PC-3 (cell line): ENCODE measurements at regions of chr13 and their contacts with region 1.

Region 1: DNA sequence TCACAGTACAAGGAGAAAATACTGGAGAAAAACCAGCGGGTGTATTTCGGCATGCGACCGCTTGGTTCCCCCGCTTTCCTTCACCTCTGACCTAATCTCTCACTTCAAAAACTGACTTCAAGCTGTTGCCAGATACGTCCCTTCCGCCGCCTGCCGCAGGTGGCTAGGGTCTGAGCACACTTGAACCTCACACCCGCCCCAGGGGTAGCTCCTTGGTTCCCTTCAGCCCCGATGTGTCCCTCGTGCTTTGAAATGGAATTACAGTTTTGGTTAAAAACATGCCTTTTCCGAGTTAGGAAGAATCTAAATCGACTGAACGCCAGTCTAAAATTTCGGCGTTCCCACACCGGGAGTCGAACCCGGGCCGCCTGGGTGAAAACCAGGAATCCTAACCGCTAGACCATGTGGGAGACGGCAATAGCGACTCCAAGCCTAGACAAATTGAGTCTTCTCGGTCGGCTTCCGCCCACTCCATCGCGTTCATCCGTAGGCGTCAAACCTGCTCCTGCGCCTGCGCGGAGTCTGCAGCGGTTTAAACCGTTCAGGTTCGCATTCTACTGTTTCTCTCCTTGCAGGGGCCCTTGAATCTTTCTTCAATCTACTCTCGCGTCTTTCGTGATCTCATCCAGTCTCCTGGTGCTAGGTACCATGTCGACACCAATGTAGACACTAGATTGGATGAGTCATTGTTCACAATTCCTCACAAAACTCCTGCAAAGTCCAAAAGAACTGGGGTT is 71.5 kb downstream of the NUFIP1 start:
- DNase-seq: peak; percentile 92
- ATAC-seq: peak; percentile 52
- H3K4me3 ChIP-seq: peak overlapping the region; percentile 71
- H3K27ac ChIP-seq: peak overlapping the region; percentile 94
- H3K4me1 ChIP-seq: peaks cover 28% of the 10 kb centered on the region
- H3K27me3 ChIP-seq: no peaks in the 10 kb centered on the region
- CTCF ChIP-seq: no peak

Region 2: DNA sequence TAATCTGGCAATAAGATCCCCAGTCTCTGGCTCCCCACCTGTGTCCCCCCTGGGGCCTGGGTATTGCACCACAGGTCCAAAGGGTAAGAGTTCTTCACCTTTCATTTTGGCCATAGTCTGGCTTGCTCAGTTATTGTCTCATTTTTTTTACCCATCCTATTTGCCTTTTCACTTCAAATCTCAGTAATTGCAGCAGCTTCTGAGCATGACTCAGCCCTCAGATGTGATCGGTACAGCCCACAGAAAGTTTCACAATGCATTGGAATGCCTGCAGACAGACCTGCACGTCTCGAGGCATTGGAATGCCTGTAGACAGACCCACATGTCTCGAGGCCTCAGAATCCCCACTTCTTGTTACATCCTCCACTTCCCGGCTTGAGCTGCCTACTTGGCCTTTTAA is 102.1 kb before region 1 on chr13:
- CTCF ChIA-PET with region 1: no interaction called
- POLR2A ChIA-PET with region 1: no interaction called
- intact Hi-C with region 1: loop called (anchors 5 kb)
- DNase-seq: peak; percentile 91
- ATAC-seq: peak; percentile 81
- H3K4me3 ChIP-seq: no peak overlapping the region
- H3K27ac ChIP-seq: peak overlapping the region; percentile 95
- H3K4me1 ChIP-seq: peaks cover 66% of the 10 kb centered on the region
- H3K27me3 ChIP-seq: no peaks in the 10 kb centered on the region
- CTCF ChIP-seq: no peak

Region 3: DNA sequence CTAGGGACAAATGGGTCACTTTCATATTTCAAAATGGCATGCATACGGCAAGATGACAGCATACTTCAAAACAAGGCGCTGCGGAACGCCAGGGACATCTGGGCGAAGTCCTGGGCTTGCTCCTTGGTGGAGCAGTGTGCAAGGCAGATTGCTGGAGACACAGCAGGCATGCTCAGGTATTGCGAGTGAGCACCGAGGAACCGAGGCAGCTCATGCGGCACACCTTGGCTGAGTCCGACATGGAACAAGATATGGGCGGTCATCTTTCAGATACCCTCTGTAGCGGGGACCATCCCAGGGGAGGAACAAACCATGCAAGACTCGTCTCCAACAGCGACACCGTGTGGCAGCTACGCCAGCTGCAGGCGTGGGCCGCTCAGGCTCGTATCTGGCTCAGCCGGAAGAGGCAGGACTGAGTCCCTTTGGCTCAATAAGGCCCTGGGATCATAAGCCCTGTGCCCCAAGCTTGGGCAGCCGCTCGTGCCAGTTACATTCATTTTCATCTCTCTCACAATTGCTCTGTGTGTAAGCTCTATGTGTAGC is 40.9 kb before region 1 on chr13:
- CTCF ChIA-PET with region 1: no interaction called
- POLR2A ChIA-PET with region 1: no interaction called
- intact Hi-C with region 1: no loop called
- DNase-seq: no peak
- ATAC-seq: no peak
- H3K4me3 ChIP-seq: no peak overlapping the region
- H3K27ac ChIP-seq: no peak overlapping the region
- H3K4me1 ChIP-seq: no peaks in the 10 kb centered on the region
- H3K27me3 ChIP-seq: no peaks in the 10 kb centered on the region
- CTCF ChIP-seq: peak; percentile 46